ENCODE measurements at regions of chr3 and their contacts with region 1.

Region 1: DNA sequence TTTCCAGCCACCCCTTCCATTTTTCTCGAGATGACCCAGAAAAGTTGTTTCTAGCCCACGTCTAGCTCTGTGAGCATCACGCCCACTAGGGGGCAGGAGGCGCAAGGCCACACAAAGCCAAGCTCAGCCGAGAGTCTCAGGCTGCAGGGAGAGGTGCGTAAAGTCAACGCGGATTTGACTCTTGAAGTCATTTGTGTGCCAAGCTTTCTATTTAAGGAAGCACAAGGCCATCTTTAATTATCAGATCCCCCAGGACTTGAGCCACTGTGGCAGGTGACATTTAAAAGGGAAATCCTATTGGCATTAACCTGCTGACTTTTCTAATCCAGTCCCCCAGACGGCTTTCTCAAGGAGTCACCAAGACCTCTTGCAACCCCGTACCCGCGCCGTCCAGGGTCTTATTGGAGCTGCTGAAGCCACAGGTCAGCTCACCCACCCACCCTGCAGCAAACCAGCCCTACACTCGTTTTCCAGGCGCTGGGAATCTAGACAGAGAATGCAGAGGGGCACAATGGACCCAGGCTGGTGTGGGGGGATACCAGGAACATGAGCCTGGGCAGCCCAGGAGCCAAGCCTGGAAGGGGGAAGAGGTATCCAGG is 62.1 kb downstream of the CAPN7 start:
- DNase-seq: peak; percentile 49 to 72
- H3K4me3 ChIP-seq: no peak overlapping the region
- H3K27ac ChIP-seq: no peak overlapping the region
- H3K4me1 ChIP-seq: peaks cover 27% of the 10 kb centered on the region
- H3K27me3 ChIP-seq: no peaks in the 10 kb centered on the region
- CTCF ChIP-seq: peak; percentile 97

Region 2: DNA sequence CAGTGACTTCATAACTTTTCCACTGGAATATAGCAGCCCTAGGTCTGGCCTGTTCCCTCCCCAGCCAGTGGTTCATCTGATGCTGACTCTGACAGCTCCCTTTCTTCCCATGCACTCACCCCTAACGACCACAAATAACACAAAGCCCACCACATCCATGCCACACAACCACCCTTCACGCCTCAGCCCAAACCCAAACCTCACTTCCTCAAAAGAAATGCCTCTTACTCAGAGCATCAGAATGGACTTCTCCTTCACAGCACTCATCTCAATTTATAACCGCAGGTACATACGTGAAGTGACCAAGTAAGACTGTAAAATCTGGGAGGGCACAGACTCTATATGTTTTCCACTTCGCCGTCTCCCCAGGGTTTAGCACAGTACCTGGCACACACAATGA is 170.2 kb before region 1 on chr3:
- CTCF ChIA-PET with region 1: no interaction called
- POLR2A ChIA-PET with region 1: no interaction called
- intact Hi-C with region 1: no loop called
- DNase-seq: no peak
- H3K4me3 ChIP-seq: peak overlapping the region; percentile 98
- H3K27ac ChIP-seq: no peak overlapping the region
- H3K4me1 ChIP-seq: peaks cover 14% of the 10 kb centered on the region
- H3K27me3 ChIP-seq: no peaks in the 10 kb centered on the region
- CTCF ChIP-seq: no peak

Region 3: DNA sequence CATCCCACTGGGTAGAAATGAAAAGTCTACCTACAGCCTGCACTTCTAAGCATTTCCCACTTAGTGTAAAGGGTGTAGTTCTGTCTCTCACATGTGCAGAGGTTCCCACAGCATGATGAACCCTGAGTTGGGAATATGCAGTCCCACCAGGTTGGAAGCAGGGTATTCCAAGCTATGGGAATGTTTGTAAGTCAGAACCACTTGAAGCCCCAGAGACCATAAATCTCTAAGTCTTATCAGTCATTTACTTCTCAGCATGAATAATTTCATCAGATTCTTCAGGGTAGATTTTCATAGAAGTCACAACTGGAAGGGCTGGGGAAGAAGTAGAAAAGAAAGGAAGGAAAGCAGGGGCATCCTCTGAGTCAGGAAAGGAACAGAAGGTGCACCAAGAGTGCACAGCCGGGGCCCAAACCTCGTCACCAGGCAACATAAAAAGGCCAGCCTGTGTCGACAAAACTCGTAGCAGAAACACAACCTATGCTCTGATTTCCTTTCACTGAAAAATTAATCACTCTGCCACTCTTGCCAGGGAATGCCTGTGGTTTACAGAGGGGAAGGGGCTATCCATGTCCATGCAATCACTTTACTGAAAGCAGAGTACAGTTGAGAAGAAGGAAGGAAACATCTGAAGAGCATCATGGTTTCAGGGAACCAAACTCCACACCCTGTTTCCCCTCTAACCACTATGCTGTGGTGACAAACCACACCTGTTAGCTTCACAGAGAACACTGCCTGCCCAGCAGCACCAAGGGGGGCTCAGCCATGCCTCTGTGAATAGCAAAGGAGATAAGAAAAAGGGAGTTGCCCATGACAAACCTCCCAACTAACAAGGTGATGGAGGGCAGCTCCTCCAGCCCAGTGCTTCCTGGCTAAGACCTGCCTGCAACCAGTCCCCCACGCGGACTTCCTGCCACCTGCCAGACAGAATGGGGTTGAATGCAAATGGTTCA is 23.7 kb after region 1 on chr3:
- CTCF ChIA-PET with region 1: interaction called, 4 read pairs
- POLR2A ChIA-PET with region 1: no interaction called
- intact Hi-C with region 1: loop called (anchors 1 kb)
- DNase-seq: peak in 1 of 2 experiments; percentile 30
- H3K4me3 ChIP-seq: no peak overlapping the region; the same call in 1 of the 2 replicates
- H3K27ac ChIP-seq: peak overlapping the region; percentile 71
- H3K4me1 ChIP-seq: peaks cover 28% of the 10 kb centered on the region
- H3K27me3 ChIP-seq: no peaks in the 10 kb centered on the region
- CTCF ChIP-seq: no peak

Region 4: DNA sequence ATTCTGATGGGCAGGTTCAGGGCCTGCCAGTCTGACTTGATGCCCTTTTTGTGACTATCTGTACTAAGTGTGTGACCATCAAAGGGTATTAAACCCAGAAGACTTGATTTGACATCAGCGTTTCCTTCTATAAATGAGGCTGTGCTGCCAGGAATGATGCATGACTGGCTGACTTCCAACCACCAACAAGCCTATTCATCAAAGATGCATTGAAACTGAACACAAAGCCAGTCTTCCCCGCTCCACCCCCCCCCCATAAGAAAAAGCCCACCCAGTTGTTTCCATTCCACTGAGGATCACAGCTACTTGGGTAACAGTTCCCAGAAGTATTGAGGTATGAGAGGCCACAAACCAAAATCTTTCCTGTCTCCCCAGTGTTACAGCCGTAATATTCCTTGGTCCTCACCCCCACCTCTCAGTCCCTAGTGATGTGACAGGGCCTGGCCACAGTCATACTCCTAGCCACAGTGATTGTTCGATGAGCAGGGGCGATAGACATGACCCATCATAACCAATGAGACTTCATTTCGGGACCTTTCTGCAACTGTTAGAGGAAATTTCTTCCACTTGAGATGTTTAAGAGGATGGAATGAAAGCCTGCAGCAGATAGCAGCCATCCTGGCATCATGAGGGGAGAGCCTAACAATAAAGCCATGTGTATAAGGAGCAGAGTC is 41.7 kb after region 1 on chr3:
- CTCF ChIA-PET with region 1: interaction called, 4 read pairs
- POLR2A ChIA-PET with region 1: no interaction called
- intact Hi-C with region 1: loop called (anchors 1 kb)
- DNase-seq: no peak
- H3K4me3 ChIP-seq: peak overlapping the region; percentile 3; the same call in 1 of the 2 replicates
- H3K27ac ChIP-seq: peak overlapping the region; percentile 82
- H3K4me1 ChIP-seq: peaks cover 37% of the 10 kb centered on the region
- H3K27me3 ChIP-seq: no peaks in the 10 kb centered on the region
- CTCF ChIP-seq: no peak

Region 5: DNA sequence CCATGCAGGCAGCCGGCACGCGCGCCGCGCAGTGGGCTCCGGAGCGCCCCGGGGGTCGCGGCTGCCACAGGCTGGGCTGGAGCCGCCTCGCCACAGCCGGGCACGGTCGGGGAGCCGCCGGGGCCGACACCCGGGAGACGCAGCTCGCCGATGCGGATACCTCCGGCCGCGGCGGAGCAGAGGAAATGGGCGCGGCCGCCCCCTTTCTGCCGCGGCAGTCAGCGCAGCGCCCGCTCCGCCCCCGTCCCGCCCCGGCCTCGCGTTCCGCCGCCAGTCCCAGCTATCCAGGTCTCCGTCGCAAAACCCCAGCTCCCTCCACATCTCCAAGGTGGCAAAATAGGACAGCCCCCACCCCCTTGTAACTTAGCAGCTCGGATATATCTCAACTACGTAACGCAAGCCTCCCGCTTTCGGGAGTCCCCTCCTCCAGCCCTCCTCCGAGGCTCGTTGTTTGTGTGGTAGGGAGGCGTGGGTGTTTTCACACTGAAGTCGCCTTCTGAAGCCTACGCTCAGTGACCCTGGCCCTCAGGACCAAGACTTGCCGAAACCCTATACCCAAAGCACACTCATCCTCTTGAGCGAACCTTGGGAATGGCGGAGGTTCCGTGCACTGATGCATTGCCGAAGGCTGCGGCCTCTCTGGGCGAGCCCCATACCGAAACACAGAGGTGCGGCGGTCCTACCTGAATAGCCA is 64.4 kb after region 1 on chr3 and contains the start of gene SH3BP5:
- CTCF ChIA-PET with region 1: interaction called, 10 read pairs
- POLR2A ChIA-PET with region 1: interaction called, 11 read pairs
- intact Hi-C with region 1: loop called (anchors 2 kb)
- DNase-seq: peak; percentile 36 to 76
- H3K4me3 ChIP-seq: peak within 1 kb of the TSS; percentile 95
- H3K27ac ChIP-seq: peak within 1 kb of the TSS; percentile 43; the same call in 1 of the 2 replicates
- H3K4me1 ChIP-seq: peaks cover 68% of the 10 kb centered on the region
- H3K27me3 ChIP-seq: no peaks in the 10 kb centered on the region
- CTCF ChIP-seq: peak; percentile 69
- total RNA-seq, gene SH3BP5: 31.6 and 39.3 TPM in 2 replicates

Region 6: GRCh38 chr3:15405448-15406050 is 137.4 kb after region 1 on chr3:
- CTCF ChIA-PET with region 1: interaction called, 18 read pairs
- POLR2A ChIA-PET with region 1: interaction called, 3 read pairs
- intact Hi-C with region 1: loop called (anchors 1 kb)
- DNase-seq: no peak
- H3K4me3 ChIP-seq: no peak overlapping the region
- H3K27ac ChIP-seq: no peak overlapping the region
- H3K4me1 ChIP-seq: peaks cover 8% of the 10 kb centered on the region; the same call in 1 of the 2 replicates
- H3K27me3 ChIP-seq: no peaks in the 10 kb centered on the region
- CTCF ChIP-seq: peak; percentile 84

Region 7: GRCh38 chr3:15557511-15557946 is 289.4 kb after region 1 on chr3:
- CTCF ChIA-PET with region 1: no interaction called
- POLR2A ChIA-PET with region 1: no interaction called
- intact Hi-C with region 1: loop called (anchors 5 kb)
- DNase-seq: peak; percentile 70 to 77
- H3K4me3 ChIP-seq: no peak overlapping the region
- H3K27ac ChIP-seq: no peak overlapping the region
- H3K4me1 ChIP-seq: 0 out of 2 replicates have a peak, but pooled peaks cover 3% of the 10 kb centered on the region
- H3K27me3 ChIP-seq: no peaks in the 10 kb centered on the region
- CTCF ChIP-seq: peak; percentile 85

Region 8: GRCh38 chr3:15682561-15683185 is 414.5 kb after region 1 on chr3:
- CTCF ChIA-PET with region 1: no interaction called
- POLR2A ChIA-PET with region 1: no interaction called
- intact Hi-C with region 1: no loop called
- DNase-seq: no peak
- H3K4me3 ChIP-seq: no peak overlapping the region
- H3K27ac ChIP-seq: 0 out of 2 replicates have a peak overlapping the region, but pooled peaks have one; percentile 1
- H3K4me1 ChIP-seq: no peaks in the 10 kb centered on the region
- H3K27me3 ChIP-seq: no peaks in the 10 kb centered on the region
- CTCF ChIP-seq: no peak

Measured in PC-9 (cell line).